ENCODE measurements at regions of chr1 and their contacts with region 1.

Region 1: GRCh38 chr1:68293609-68294366 is 61.5 kb upstream of the WLS start:
- DNase-seq: peak; percentile 83
- ATAC-seq: peak; percentile 71
- H3K4me3 Mint-ChIP-seq: peak overlapping the region; percentile 63
- H3K27ac Mint-ChIP-seq: peak overlapping the region; percentile 67
- H3K4me1 Mint-ChIP-seq: peaks cover 47% of the 10 kb centered on the region
- H3K27me3 Mint-ChIP-seq: peaks cover 84% of the 10 kb centered on the region
- CTCF ChIP-seq: no peak

Region 2: DNA sequence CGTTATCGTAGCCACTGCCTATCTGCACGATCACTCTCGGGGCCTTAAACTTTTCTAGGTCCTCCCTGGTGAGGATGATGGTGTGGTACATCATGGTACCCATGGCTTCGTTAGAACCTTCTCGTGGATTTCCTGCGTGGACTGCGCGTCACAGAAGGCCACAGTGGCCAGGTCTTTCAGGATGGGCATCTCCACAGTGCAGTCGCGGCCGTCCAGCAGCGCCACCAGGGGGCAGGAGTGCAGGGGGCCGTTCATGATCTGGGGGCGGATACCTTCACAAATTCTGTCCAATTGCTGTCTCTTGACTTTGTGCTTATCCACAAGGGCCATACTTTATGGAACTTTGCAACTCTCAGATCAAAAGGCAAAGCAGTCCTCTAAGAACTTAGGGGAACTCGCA is 131.0 kb before region 1 on chr1:
- CTCF ChIA-PET with region 1: no interaction called
- POLR2A ChIA-PET with region 1: no interaction called
- DNase-seq: peak; percentile 56
- ATAC-seq: peak; percentile 80
- H3K4me3 Mint-ChIP-seq: no peak overlapping the region
- H3K27ac Mint-ChIP-seq: no peak overlapping the region
- H3K4me1 Mint-ChIP-seq: peaks cover 1% of the 10 kb centered on the region
- H3K27me3 Mint-ChIP-seq: no peaks in the 10 kb centered on the region
- CTCF ChIP-seq: peak; percentile 54

Region 3: DNA sequence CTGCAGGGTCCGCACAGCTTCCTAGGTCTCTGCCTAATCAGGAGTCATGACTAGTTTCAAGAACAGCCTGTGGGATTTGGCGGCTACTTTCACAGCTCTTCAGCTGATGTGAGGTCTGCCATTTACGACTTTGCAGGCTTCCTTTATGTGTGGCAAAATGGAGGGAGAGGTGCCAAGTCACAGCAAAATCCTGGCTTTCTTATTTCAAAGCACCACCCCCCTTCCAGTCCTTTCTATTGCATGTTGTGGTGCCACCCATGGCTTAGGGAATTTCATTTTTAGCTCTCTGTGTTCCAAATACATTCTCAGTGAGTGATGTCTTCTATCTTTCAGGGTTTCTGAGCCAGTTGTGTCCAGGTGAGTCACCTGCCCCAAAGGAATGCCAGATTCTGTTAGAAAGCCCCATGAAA is 13.6 kb after region 1 on chr1:
- CTCF ChIA-PET with region 1: no interaction called
- POLR2A ChIA-PET with region 1: no interaction called
- DNase-seq: no peak
- ATAC-seq: no peak
- H3K4me3 Mint-ChIP-seq: no peak overlapping the region
- H3K27ac Mint-ChIP-seq: no peak overlapping the region
- H3K4me1 Mint-ChIP-seq: no peaks in the 10 kb centered on the region
- H3K27me3 Mint-ChIP-seq: peaks cover 10% of the 10 kb centered on the region
- CTCF ChIP-seq: no peak

Region 4: DNA sequence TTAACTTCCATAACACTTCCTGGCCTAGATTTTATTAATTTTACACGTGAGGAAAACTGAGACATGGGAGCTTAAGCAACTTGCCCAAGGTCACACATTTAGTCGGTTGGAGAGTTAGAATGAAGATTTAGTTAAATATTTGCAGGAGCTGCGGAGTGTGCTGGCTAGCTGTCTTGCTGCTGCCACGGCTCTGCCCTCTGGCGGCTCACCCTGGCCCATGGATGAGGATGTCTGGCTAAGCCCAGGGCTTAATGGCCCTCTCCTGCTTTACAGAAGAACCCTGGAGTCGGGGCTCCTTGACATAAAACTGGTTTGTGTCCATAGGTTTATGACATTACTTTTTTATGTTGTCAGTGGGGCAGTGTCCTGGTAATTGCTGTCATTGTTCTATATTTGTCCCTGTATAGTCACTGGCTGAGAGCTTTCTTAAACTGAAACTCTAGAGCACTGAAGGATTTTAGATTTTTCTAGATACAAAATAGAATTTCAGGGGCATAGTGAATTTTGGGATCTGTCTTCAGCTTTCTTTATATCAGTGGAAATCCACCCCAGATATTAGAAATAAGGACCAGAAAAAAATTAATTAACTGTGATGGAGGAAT is 27.4 kb after region 1 on chr1:
- CTCF ChIA-PET with region 1: interaction called, 11 read pairs
- POLR2A ChIA-PET with region 1: no interaction called
- DNase-seq: peak; percentile 73
- ATAC-seq: peak; percentile 90
- H3K4me3 Mint-ChIP-seq: no peak overlapping the region
- H3K27ac Mint-ChIP-seq: no peak overlapping the region
- H3K4me1 Mint-ChIP-seq: peaks cover 13% of the 10 kb centered on the region
- H3K27me3 Mint-ChIP-seq: no peaks in the 10 kb centered on the region; the same call in 1 of the 2 replicates
- CTCF ChIP-seq: no peak

Measured in WTC11 (cell line).